Activated naive CD8-positive, alpha-beta T cell treated with anti-CD3 and anti-CD28 coated beads, Interleukin-2, amount 10 ng/mL, durations not matched to agents 7 days and 5 days (primary cell): ENCODE measurements at regions of chr17 and their contacts with region 1.

Region 1: DNA sequence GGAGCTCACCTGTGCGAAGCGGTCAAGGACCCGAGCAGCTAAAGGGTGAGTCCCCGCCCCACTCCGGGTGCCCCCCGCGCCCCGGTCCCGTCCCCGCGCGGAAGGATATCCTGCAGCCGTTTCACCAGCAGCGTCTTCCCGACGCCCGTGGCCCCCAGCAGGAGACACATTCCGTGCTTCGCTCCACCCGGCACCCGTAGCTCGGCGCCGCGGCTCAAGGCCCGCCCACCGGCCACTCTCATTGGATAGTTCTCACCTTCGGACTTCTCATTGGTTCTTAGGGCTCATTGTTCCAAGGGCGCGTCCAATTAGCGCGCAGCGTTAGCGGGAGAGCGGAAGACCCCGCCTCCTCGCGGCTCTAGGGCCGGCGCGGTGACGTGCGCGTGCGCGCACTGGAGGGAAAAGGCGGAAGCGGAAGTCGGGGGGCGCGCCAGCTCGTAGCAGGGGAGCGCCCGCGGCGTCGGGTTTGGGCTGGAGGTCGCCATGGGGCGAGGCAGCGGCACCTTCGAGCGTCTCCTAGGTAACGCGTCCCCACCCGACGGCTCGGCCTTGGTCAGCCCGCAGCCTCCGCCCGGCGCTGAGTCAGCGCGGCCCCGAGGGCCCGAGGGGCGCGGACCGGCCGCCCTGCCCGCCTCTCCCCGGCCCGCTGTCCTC is at the starts of genes ARL16 and HGS:
- DNase-seq: peak; percentile 98
- ATAC-seq: peak; percentile 98
- H3K4me3 Mint-ChIP-seq: peak within 1 kb of the TSS; percentile 98
- H3K27ac Mint-ChIP-seq: peak within 1 kb of the TSS; percentile 90
- H3K4me1 Mint-ChIP-seq: peaks cover 24% of the 10 kb centered on the region
- H3K27me3 Mint-ChIP-seq: no peaks in the 10 kb centered on the region
- total RNA-seq, gene ARL16: 17.7 to 19.0 TPM
- total RNA-seq, gene HGS: 152 to 164 TPM

Region 2: DNA sequence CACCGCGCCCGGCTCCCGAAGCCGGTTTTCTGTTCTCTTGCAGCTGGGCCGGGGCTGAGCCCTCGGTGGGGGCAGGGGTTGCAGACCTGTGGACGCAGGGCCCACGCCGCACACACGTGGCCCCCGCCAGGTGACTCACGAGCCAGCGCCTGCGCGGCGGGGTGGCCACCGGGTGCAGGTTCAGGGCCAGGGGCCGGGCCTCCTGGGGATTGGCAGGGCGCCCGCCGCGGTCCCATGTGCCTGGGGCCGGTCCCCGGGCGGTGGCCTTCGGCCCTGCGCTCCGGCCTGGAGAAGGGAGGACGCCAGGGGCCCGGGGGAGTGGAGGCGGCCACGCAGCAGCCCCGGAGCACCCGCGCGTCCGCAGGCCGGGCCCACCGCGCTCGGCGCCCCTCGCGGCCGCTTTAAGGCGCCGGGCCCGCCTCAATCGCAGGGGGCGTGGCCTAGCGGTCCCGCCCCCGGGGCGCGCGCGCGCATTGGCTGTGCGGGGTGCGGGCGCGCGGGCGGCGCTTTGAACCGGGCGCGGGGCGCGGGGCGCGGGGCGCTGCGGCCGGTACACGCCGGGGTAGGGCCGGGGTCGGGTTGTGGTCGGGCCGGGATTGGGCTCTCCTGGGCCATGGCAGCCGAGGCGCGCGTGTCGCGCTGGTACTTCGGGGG is 28.2 kb after region 1 on chr17 and contains the start of gene SLC25A10:
- POLR2A ChIA-PET with region 1: interaction called, 15 read pairs
- DNase-seq: peak; percentile 92
- ATAC-seq: peak; percentile 85
- H3K4me3 Mint-ChIP-seq: peak within 1 kb of the TSS; percentile 89
- H3K27ac Mint-ChIP-seq: peak within 1 kb of the TSS; percentile 86
- H3K4me1 Mint-ChIP-seq: peaks cover 17% of the 10 kb centered on the region
- H3K27me3 Mint-ChIP-seq: no peaks in the 10 kb centered on the region
- total RNA-seq, gene SLC25A10: 22.0 to 25.1 TPM

Region 3: GRCh38 chr17:81860756-81861518 is 177.2 kb after region 1 on chr17:
- POLR2A ChIA-PET with region 1: interaction called, 11 read pairs
- DNase-seq: peak; percentile 100
- ATAC-seq: peak; percentile 91
- H3K4me3 Mint-ChIP-seq: peak overlapping the region; percentile 87
- H3K27ac Mint-ChIP-seq: peak overlapping the region; percentile 90
- H3K4me1 Mint-ChIP-seq: peaks cover 29% of the 10 kb centered on the region
- H3K27me3 Mint-ChIP-seq: no peaks in the 10 kb centered on the region